Panc1 (cell line): ENCODE measurements at regions of chr6 and their contacts with region 1.

Region 1: GRCh38 chr6:12233693-12234571 is 56.2 kb upstream of the EDN1 start:
- DNase-seq: peak; percentile 47
- ATAC-seq: peak; percentile 90
- H3K4me3 ChIP-seq: no peak overlapping the region
- H3K27ac ChIP-seq: peak overlapping the region; percentile 59; the same call in 1 of the 2 replicates
- H3K4me1 ChIP-seq: 0 out of 2 replicates have a peak, but pooled peaks cover 2% of the 10 kb centered on the region
- H3K27me3 ChIP-seq: no peaks in the 10 kb centered on the region
- CTCF ChIP-seq: peak; percentile 83

Region 2: GRCh38 chr6:11317885-11318771 is 915.8 kb before region 1 on chr6:
- CTCF ChIA-PET with region 1: no interaction called
- POLR2A ChIA-PET with region 1: no interaction called
- in situ Hi-C with region 1: no loop called
- intact Hi-C with region 1: no loop called
- DNase-seq: peak; percentile 22
- ATAC-seq: no peak
- H3K4me3 ChIP-seq: no peak overlapping the region
- H3K27ac ChIP-seq: no peak overlapping the region
- H3K4me1 ChIP-seq: no peaks in the 10 kb centered on the region; the same call in 1 of the 2 replicates
- H3K27me3 ChIP-seq: no peaks in the 10 kb centered on the region
- CTCF ChIP-seq: no peak

Region 3: DNA sequence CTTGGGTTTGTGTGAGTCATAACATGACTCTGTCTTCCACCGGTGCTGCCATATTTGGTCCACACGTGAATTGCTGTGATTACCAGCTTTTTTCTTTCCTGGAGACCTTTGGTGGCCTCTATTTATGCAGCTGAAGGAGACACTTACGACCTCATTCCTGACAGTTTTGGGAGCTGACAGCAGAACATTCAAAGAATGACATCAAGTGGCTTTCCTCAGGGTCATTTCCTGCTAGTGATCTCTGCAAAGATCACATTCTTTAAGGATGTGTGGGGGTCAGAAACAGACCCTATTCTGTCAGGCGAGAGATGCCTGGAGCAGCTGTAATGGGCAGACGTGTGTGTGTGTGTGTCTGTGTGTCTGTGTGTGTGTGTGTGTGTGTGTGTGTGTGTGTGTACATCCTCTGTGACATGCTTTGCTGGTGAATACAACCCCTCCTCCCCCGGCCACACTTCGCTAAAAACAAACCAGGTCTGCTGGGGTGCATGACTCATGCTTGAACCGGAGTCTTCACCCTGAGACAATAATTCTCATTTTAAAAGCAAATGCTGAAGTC is 580.8 kb before region 1 on chr6:
- CTCF ChIA-PET with region 1: interaction called, 3 read pairs
- POLR2A ChIA-PET with region 1: no interaction called
- in situ Hi-C with region 1: no loop called
- intact Hi-C with region 1: loop called (anchors 2 kb)
- DNase-seq: no peak
- ATAC-seq: no peak
- H3K4me3 ChIP-seq: no peak overlapping the region
- H3K27ac ChIP-seq: no peak overlapping the region
- H3K4me1 ChIP-seq: no peaks in the 10 kb centered on the region
- H3K27me3 ChIP-seq: no peaks in the 10 kb centered on the region
- CTCF ChIP-seq: no peak

Region 4: GRCh38 chr6:11833626-11834592 is 400.0 kb before region 1 on chr6:
- CTCF ChIA-PET with region 1: no interaction called
- POLR2A ChIA-PET with region 1: no interaction called
- in situ Hi-C with region 1: no loop called
- intact Hi-C with region 1: no loop called
- DNase-seq: no peak
- ATAC-seq: no peak
- H3K4me3 ChIP-seq: no peak overlapping the region
- H3K27ac ChIP-seq: no peak overlapping the region
- H3K4me1 ChIP-seq: no peaks in the 10 kb centered on the region
- H3K27me3 ChIP-seq: peaks cover 2% of the 10 kb centered on the region; the same call in 1 of the 2 replicates
- CTCF ChIP-seq: no peak

Region 5: DNA sequence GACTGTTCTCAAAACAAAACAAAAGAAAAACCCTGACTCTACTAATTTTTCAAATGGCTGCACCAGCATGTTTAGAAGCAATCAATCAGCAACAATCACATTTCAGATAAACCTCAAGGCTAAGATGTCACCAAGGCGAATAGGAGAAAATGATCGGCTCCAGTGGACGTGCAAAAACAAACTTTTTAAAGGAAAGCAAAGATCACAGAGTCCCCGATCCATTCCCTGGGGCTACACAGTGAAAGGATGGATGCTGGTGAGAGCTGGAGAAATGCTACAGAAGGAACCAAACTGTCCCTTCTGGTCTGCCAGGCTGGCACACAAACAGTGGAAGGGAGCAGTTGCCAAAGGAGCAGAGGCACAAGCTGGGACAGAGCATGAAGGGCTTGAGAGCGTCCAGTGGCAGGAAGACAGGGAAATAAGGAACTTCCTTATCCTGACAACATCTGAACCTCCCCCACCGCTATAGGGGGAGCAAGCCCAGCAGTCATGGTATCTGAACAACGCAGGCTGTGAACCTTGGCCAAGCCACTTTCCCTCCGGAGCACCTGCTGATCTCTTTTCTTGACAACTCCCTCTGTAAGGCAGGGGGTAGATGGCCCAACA is 295.5 kb before region 1 on chr6:
- CTCF ChIA-PET with region 1: no interaction called
- POLR2A ChIA-PET with region 1: no interaction called
- in situ Hi-C with region 1: no loop called
- intact Hi-C with region 1: loop called (anchors 10 kb)
- DNase-seq: no peak
- ATAC-seq: no peak
- H3K4me3 ChIP-seq: no peak overlapping the region
- H3K27ac ChIP-seq: no peak overlapping the region
- H3K4me1 ChIP-seq: no peaks in the 10 kb centered on the region
- H3K27me3 ChIP-seq: no peaks in the 10 kb centered on the region
- CTCF ChIP-seq: no peak

Region 6: DNA sequence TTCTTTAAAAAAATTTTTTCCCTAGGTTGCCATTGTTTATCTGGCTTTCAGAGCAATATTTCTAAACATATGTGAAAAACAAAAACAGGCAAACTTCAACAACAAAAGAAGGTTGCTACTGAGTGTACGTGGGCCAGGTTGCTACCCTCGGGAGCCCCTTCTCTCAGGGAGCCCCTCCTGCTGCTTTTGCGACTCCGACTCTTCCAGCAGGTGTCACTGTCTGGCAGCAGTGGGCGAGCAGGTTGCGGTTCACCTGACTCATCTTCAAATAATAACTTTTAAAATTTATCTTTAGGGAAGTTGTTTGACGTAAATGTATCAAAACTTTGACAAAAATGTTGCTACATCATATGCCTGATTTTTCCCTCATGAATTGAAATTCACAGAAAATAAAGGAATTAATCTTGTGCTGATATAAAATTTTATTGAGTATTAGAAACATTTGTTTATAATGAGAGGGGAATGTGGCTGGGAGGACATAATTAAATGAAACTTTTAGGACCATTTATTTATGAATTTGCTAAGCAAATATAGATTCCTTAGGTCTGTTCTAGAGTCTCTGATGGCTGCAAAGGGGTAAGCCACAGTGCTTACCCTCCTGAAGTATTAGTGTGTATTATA is 83.0 kb before region 1 on chr6:
- CTCF ChIA-PET with region 1: interaction called, 4 read pairs
- POLR2A ChIA-PET with region 1: no interaction called
- in situ Hi-C with region 1: no loop called
- intact Hi-C with region 1: loop called (anchors 5 kb)
- DNase-seq: no peak
- ATAC-seq: no peak
- H3K4me3 ChIP-seq: no peak overlapping the region
- H3K27ac ChIP-seq: no peak overlapping the region
- H3K4me1 ChIP-seq: peaks cover 24% of the 10 kb centered on the region
- H3K27me3 ChIP-seq: no peaks in the 10 kb centered on the region
- CTCF ChIP-seq: peak; percentile 85